ENCODE measurements at regions of chr6 and their contacts with region 1.

Region 1: GRCh38 chr6:133837801-133838349 is 51.0 kb upstream of the TCF21 start:
- DNase-seq: no peak
- ATAC-seq: peak; percentile 39

Region 2: GRCh38 chr6:133916650-133917151 is 78.8 kb after region 1 on chr6:
- intact Hi-C with region 1: loop called (anchors 1 kb)
- DNase-seq: peak; percentile 92
- ATAC-seq: peak; percentile 90

Measured in Right ventricle myocardium inferior (tissue), 1 donor.